ENCODE measurements at regions of chr10 and their contacts with region 1.

Region 1: DNA sequence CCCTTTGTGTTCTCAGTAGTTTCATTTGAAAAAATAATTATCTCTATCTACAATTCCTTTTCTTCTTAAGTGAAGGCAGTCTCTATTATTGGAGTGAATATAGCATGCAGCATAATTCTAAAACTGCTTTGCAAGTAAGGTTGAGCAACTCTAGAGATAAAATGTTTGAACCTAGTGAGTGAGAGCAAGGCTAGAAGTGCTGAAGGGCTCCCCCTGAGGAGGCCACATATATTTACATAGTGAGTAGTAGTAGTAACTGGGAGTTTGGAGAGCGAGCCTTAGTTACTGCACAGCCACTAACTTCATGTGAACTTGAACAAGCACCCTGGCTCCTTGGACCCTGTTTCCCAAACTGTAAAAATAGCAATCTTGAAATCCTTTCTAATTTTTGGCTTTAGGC is 141.5 kb upstream of the DKK1 start:
- DNase-seq: no peak
- H3K4me3 ChIP-seq: no peak overlapping the region
- H3K27ac ChIP-seq: no peak overlapping the region
- H3K4me1 ChIP-seq: no peaks in the 10 kb centered on the region
- H3K27me3 ChIP-seq: peaks cover 3 to 5% of the 10 kb centered on the region in 2 experiments
- CTCF ChIP-seq: no peak
- POLR2A ChIP-seq: no peak

Region 2: DNA sequence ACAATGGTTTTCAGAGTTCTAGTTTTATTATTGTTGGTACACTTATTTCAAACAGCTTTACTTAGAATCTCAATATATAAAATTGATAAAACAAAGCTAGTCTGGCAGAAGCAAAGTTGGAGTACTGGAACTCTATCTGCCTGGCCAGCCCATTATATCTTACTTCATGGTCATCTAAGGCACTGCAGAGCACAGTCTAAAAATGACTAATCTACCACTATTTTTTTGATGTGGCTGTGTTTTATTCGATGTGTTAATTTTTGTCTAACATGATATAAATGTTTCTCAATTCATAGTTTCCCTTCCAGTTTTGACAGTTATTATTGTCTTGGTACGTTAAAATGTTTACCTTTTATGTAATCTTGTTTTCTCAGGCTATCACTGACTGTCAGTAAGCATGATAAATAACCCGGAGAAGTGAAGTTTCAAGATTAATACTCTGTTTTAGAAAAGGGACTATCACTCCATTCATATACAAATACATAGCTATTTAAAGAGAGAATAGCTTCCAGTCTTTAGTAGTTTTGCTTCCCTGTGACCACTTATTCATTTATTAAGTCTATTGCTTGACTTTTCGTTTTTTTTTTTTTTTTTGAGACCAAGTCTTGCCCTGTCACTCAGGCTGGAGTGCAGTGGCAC is 412.6 kb before region 1 on chr10:
- CTCF ChIA-PET with region 1: no interaction called
- POLR2A ChIA-PET with region 1: no interaction called
- dilution Hi-C with region 1: no loop called
- intact Hi-C with region 1: loop called (anchors 10 kb)
- DNase-seq: peak; percentile 44
- H3K4me3 ChIP-seq: no peak overlapping the region
- H3K27ac ChIP-seq: no peak overlapping the region
- H3K4me1 ChIP-seq: no peaks in the 10 kb centered on the region
- H3K27me3 ChIP-seq: no peaks in the 10 kb centered on the region
- CTCF ChIP-seq: no peak
- POLR2A ChIP-seq: no peak

Region 3: GRCh38 chr10:52194191-52194590 is 21.6 kb after region 1 on chr10:
- CTCF ChIA-PET with region 1: interaction called, 10 read pairs
- POLR2A ChIA-PET with region 1: no interaction called
- dilution Hi-C with region 1: no loop called
- intact Hi-C with region 1: no loop called
- DNase-seq: no peak
- H3K4me3 ChIP-seq: no peak overlapping the region
- H3K27ac ChIP-seq: no peak overlapping the region
- H3K4me1 ChIP-seq: no peaks in the 10 kb centered on the region
- H3K27me3 ChIP-seq: peaks cover 0 to 2% of the 10 kb centered on the region in 2 experiments
- CTCF ChIP-seq: no peak
- POLR2A ChIP-seq: no peak